ENCODE measurements at regions of chr3 and their contacts with region 1.

Region 1: DNA sequence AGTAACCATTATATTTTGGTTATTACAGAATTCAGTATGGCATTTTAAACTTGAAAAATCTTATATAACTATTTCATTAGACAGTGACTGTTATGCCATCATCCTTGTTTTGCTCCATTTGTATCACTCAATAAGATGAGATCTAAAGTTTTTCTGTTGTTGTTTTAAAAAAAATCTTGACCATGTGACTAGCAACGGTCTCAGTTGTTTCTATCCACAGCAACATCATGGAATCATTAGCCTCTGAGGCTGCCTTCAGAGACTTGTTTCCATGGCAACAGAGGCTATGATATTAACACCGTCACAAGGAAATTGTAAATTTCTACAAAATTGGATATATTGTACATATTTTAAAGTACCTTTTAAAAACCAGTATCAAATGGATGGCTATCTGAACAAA is 129.8 kb downstream of the DLG1 start:
- DNase-seq: no peak
- H3K27ac ChIP-seq: no peak overlapping the region
- CTCF ChIP-seq: no peak

Region 2: GRCh38 chr3:197203714-197204146 is 35.1 kb after region 1 on chr3:
- CTCF ChIA-PET with region 1: no interaction called
- POLR2A ChIA-PET with region 1: no interaction called
- DNase-seq: no peak
- H3K27ac ChIP-seq: no peak overlapping the region
- CTCF ChIP-seq: no peak

Region 3: GRCh38 chr3:197487908-197488391 is 319.3 kb after region 1 on chr3:
- CTCF ChIA-PET with region 1: interaction called, 11 read pairs
- POLR2A ChIA-PET with region 1: no interaction called
- DNase-seq: peak; percentile 80
- H3K27ac ChIP-seq: peak overlapping the region; percentile 86
- CTCF ChIP-seq: no peak